RWPE1 (cell line): ENCODE measurements at regions of chr18 and their contacts with region 1.

Region 1: GRCh38 chr18:6465281-6465680 is 50.6 kb upstream of the L3MBTL4 start:
- DNase-seq: no peak
- H3K27ac ChIP-seq: no peak overlapping the region
- CTCF ChIP-seq: no peak

Region 2: DNA sequence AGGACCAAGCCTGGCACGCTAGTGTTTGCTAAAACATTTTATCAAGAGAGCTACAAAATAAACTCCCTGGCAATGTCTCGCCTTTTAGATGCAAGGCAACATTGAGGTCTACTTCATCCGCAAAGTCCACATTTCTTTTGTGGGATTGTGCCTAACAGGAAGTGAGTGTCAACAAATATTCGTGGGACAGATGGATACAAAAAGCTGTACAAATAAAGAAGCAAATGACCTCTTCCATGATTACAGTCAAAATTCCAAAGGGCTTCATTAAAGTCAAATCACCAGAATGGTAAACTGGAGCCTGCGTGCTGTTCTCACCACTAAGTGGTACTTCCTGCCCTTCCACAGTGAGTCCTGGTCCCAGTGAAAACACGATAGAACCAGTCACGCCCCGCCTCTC is 90.9 kb before region 1 on chr18:
- CTCF ChIA-PET with region 1: no interaction called
- POLR2A ChIA-PET with region 1: no interaction called
- DNase-seq: no peak
- H3K27ac ChIP-seq: no peak overlapping the region
- CTCF ChIP-seq: no peak

Region 3: GRCh38 chr18:6543330-6543908 is 78.1 kb after region 1 on chr18:
- CTCF ChIA-PET with region 1: no interaction called
- POLR2A ChIA-PET with region 1: no interaction called
- DNase-seq: peak; percentile 24
- H3K27ac ChIP-seq: no peak overlapping the region
- CTCF ChIP-seq: peak; percentile 45

Region 4: GRCh38 chr18:6994771-6995435 is 529.6 kb after region 1 on chr18:
- CTCF ChIA-PET with region 1: no interaction called
- POLR2A ChIA-PET with region 1: interaction called, 10 read pairs
- DNase-seq: peak; percentile 69
- H3K27ac ChIP-seq: peak overlapping the region; percentile 87
- CTCF ChIP-seq: no peak